PC-9 (cell line): ENCODE measurements at regions of chr2 and their contacts with region 1.

Region 1: DNA sequence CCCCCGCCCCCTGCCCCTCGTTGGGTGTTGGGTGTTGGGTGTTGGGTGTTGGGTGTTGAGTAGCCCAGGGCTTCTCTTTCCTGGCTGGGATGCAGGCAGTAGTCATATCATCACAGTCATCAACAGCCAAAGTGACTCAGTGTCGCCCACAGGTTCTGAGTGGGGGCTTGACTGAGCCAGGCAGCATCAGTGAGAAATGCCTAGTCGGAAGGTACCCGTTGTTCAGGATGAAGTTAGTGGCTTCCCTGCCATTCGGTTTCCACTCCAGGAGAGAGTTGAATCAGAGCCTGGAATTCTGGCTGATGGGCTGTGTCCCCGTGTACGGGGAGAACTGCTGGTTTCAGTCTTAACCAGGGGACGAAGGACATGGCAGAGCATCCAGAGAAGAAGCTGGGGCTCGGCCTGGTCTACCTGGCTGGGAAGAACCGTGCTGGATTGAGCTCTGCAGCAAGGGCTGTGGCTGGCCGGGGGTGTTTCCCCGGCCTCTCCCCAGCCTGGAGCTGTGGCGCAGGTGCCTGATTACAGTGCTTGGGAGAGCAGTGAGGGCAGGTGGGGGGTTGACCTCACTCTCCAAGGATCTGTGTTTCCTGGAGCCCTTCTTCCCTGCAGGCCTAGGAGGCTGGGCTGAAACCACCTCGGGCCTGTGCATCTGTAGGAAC is 49.4 kb downstream of the AGAP1 start:
- DNase-seq: peak; percentile 71 to 79
- H3K4me3 ChIP-seq: peak overlapping the region; percentile 49; the same call in 1 of the 2 replicates
- H3K27ac ChIP-seq: peak overlapping the region; percentile 91
- H3K4me1 ChIP-seq: peaks cover 58% of the 10 kb centered on the region
- H3K27me3 ChIP-seq: no peaks in the 10 kb centered on the region
- CTCF ChIP-seq: no peak

Region 2: DNA sequence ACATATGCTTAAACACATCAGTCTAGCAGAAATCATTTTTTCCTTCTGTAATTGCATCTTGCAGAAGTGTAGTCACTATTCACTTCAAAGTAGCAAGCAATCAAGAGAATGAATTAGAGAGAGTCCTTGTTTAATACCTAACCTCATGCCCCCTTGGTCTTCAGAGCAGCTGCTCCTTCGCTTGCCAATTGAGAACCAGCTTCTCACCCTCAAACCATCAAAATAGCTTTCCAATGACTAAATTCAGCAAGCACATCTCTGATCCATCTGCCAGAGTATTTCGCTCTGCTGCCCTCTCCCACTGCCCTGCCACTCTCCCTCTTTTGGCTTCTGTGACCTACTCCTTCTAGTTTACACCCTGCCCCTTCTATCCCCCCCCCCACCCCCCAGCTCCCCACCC is 170.1 kb before region 1 on chr2:
- CTCF ChIA-PET with region 1: no interaction called
- POLR2A ChIA-PET with region 1: no interaction called
- intact Hi-C with region 1: no loop called
- DNase-seq: no peak
- H3K4me3 ChIP-seq: no peak overlapping the region
- H3K27ac ChIP-seq: no peak overlapping the region
- H3K4me1 ChIP-seq: peaks cover 9% of the 10 kb centered on the region
- H3K27me3 ChIP-seq: peaks cover 3% of the 10 kb centered on the region; the same call in 1 of the 2 replicates
- CTCF ChIP-seq: no peak

Region 3: GRCh38 chr2:235570256-235570655 is 27.0 kb after region 1 on chr2:
- CTCF ChIA-PET with region 1: no interaction called
- POLR2A ChIA-PET with region 1: no interaction called
- intact Hi-C with region 1: loop called (anchors 2 kb)
- DNase-seq: peak; percentile 73 to 99
- H3K4me3 ChIP-seq: no peak overlapping the region
- H3K27ac ChIP-seq: peak overlapping the region; percentile 88
- H3K4me1 ChIP-seq: peaks cover 40% of the 10 kb centered on the region
- H3K27me3 ChIP-seq: no peaks in the 10 kb centered on the region
- CTCF ChIP-seq: no peak

Region 4: DNA sequence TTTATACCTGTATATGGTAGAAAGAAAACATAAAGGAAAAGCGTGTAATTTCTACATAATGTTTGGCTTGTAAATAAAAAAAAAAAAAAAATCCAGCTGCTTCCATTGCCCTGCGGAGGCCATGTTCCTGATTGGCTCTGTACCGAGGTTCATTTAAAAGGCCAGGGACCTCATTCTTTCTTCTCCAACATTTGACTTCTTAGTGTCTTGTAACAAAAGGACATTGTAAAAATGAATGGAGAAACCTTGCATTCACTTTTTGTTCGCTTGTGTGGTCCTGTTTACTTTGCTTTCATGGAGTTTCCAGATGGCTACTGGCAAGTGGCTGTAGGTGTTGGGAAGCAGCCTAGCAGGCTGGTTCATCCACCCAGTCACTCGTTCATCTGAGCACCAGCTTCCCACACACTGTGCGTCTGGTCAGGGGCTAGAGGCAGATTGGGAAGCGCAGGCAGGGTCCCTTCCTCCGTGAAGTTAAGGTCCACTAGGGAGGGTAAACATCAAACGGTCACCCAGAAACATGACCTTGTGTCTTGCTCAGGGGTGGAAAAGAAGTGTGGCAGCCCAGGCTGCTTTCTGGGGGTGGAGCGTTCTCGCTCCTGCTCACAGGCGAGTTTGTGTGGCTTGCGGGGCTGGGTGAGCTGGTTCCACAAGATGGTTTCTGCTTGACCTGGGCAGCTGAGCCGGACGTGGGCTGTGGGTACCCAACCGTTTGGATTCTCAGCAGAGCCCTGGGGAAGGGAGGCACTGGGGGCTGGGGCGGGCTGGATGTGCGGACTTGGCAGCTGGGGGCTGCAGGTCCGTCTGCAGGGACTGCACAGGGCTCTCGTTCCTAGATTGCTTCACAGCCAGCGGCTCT is 211.3 kb after region 1 on chr2:
- CTCF ChIA-PET with region 1: no interaction called
- POLR2A ChIA-PET with region 1: no interaction called
- intact Hi-C with region 1: loop called (anchors 2 kb)
- DNase-seq: peak; percentile 56 to 84
- H3K4me3 ChIP-seq: no peak overlapping the region
- H3K27ac ChIP-seq: 0 out of 2 replicates have a peak overlapping the region, but pooled peaks have one; percentile 1
- H3K4me1 ChIP-seq: peaks cover 10% of the 10 kb centered on the region; the same call in 1 of the 2 replicates
- H3K27me3 ChIP-seq: no peaks in the 10 kb centered on the region
- CTCF ChIP-seq: no peak